Lower leg skin (tissue), 4 donors: ENCODE measurements at regions of chr20 and their contacts with region 1.

Region 1: GRCh38 chr20:39541116-39541803 is 579.1 kb downstream of the DHX35 start:
- DNase-seq: no peak
- H3K4me3 ChIP-seq: no peak overlapping the region
- CTCF ChIP-seq: no peak
- POLR2A ChIP-seq: no peak

Region 2: GRCh38 chr20:38799203-38799602 is 742.1 kb before region 1 on chr20:
- intact Hi-C with region 1: loop called (anchors 5 kb)
- DNase-seq: peak in 1 of 2 donors; percentile 78
- H3K4me3 ChIP-seq: no peak overlapping the region
- CTCF ChIP-seq: no peak
- POLR2A ChIP-seq: no peak